ENCODE measurements at regions of chr5 and their contacts with region 1.

Region 1: DNA sequence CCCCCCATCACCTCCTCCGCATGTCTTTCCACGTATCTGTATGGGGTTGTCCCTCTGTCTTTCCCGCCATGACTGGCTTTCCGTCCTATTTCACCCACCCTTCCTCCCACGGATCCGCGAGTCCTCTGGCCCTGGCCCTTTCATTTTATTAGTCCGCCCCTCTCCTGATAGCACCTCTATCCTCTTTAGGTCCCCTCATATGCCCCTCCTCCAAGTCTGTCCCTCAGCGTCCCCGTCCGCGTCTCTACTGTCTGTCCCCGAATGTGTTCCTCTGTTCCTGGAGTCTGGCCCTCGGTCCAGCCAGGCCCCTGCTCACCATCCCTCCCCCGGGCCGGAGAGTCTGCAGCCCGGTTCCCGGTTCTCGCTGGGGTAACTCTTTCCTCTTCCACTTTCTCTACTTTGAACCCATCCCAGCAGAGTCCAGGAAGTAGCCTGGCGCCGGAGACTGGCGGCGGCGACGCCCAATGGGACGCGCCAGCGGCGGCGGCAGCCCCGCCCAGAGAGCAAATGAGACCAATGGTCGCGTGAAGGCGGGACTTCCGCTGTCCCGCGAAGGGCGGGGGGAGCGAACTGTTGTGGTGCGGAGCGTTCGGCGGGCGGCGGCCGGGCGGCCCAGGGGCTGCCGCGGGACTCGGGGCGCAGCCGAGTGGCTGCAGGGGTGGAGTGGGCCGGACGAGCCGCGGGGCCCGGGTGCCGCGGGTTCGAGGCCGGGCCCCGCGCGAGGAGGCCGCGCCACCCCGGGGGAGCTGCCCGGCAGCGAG is at the start of gene SAP30L:
- DNase-seq: peak; percentile 94
- H3K4me3 Mint-ChIP-seq: peak within 1 kb of the TSS; percentile 98
- H3K27ac Mint-ChIP-seq: peak within 1 kb of the TSS; percentile 92
- H3K4me1 Mint-ChIP-seq: peaks cover 42% of the 10 kb centered on the region
- H3K27me3 Mint-ChIP-seq: no peaks in the 10 kb centered on the region
- total RNA-seq, gene SAP30L: 29.3 to 30.3 TPM

Region 2: DNA sequence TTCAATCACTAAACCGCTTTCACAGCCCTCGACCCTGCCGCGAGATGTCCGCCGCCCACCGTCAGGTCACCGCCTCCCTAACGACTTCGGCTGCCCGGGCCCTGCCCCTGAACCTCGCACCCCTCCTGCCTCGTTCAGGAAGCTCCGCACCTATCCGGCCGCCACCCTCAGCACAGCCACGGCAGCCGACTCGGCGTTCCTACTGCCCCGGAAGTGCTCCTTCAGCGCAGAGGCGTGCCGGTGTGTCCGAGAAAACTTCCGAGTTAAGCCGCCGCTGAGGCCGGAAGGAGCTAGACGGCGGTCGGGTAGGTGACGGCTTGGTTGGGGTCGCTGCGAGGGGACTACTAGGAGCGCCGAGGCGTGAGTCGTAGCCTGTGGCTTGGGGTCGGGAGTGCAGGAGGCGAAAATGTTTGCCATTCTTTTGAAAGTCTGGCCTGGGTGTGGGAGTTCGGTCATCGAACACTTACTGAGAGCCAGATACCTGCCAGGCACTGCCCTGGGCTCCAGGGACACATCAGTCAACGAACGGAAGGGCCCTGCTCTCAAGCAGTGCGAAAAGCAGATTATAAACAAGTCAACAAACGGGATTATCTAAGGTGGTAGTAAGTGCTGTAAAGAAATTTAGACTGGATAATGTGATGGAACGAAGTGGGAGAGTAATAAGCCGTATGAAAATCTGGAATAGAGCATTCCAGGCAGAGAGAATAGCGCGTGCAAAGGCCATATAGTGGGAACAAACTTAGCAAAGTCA is 406.7 kb before region 1 on chr5 and contains the starts of genes FAM114A2 and MFAP3:
- CTCF ChIA-PET with region 1: no interaction called
- intact Hi-C with region 1: loop called (anchors 1 kb)
- DNase-seq: peak; percentile 93
- H3K4me3 Mint-ChIP-seq: peak within 1 kb of the TSS; percentile 95
- H3K27ac Mint-ChIP-seq: peak within 1 kb of the TSS; percentile 92
- H3K4me1 Mint-ChIP-seq: peaks cover 44% of the 10 kb centered on the region
- H3K27me3 Mint-ChIP-seq: no peaks in the 10 kb centered on the region
- total RNA-seq, gene FAM114A2: 25.0 to 25.9 TPM
- total RNA-seq, gene MFAP3: 7.9 to 8.4 TPM

Region 3: DNA sequence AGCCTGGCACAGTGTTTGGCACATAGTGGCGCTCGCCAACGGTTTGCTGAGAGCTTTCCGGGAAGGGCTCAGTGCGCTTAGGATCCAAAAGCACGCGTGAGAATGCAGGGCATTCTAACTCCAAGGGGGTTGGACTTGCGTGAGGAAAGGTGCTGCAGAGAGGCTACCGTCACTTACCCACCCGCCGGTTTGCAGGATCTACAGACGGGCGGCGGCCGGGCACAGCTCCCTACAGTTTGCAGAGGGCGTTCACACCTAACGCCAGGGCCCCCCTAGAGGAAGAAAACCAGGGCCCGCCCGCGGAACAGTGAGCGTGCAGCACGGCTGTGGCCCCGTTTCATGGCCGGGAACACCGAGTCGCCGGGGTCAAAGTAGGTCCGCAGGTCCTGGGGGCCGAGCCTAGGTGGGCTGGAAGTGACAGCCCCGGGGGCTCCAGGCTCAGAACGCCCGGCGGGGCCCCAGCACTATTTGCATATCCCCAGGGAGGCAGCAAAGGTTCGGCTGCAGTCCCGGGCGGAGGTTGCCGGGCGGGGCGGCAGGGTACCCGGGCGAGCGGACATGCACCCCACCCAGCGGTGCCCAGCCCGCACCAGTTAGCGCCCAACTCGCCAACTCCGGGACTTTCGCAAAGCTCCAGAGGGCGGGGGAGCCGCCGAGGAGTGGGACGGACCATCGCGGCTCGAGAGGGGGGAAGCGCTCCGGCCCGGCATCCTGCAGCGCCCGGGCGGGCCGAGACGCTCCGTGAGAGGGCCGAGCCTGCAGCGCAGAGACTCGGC is 255.6 kb before region 1 on chr5:
- CTCF ChIA-PET with region 1: no interaction called
- intact Hi-C with region 1: loop called (anchors 2 kb)
- DNase-seq: peak; percentile 82
- H3K4me3 Mint-ChIP-seq: peak overlapping the region; percentile 81
- H3K27ac Mint-ChIP-seq: no peak overlapping the region
- H3K4me1 Mint-ChIP-seq: peaks cover 32% of the 10 kb centered on the region
- H3K27me3 Mint-ChIP-seq: peaks cover 7% of the 10 kb centered on the region

Region 4: GRCh38 chr5:154196955-154197652 is 248.5 kb before region 1 on chr5:
- CTCF ChIA-PET with region 1: no interaction called
- intact Hi-C with region 1: loop called (anchors 2 kb)
- DNase-seq: no peak
- H3K4me3 Mint-ChIP-seq: no peak overlapping the region
- H3K27ac Mint-ChIP-seq: peak overlapping the region; percentile 86
- H3K4me1 Mint-ChIP-seq: peaks cover 67% of the 10 kb centered on the region
- H3K27me3 Mint-ChIP-seq: no peaks in the 10 kb centered on the region

Region 5: DNA sequence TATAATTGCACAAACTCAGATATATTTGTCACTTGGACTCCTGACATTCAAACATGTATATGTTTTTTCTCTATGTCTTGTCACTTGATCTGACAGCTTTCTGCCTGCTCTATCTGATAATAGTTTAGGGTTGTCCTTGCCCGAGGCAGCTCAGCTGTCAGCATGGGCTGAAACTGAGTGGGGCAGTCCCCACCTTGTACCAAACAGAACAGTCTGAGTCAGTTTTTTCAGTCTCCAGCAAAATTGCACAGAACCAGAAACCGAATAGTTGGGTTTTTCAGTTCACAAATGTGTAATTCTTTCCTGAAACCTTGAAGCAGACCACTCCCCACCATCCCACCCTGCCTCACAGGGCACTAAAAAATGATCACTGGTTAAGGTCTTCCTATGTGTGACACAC is 41.9 kb after region 1 on chr5:
- CTCF ChIA-PET with region 1: no interaction called
- intact Hi-C with region 1: loop called (anchors 2 kb)
- DNase-seq: peak; percentile 71
- H3K4me3 Mint-ChIP-seq: no peak overlapping the region
- H3K27ac Mint-ChIP-seq: no peak overlapping the region
- H3K4me1 Mint-ChIP-seq: peaks cover 39% of the 10 kb centered on the region
- H3K27me3 Mint-ChIP-seq: peaks cover 76% of the 10 kb centered on the region

Region 6: GRCh38 chr5:154513669-154514084 is 68.1 kb after region 1 on chr5:
- CTCF ChIA-PET with region 1: no interaction called
- intact Hi-C with region 1: loop called (anchors 2 kb)
- DNase-seq: peak; percentile 66
- H3K4me3 Mint-ChIP-seq: no peak overlapping the region
- H3K27ac Mint-ChIP-seq: no peak overlapping the region
- H3K4me1 Mint-ChIP-seq: peaks cover 19% of the 10 kb centered on the region
- H3K27me3 Mint-ChIP-seq: peaks cover 35% of the 10 kb centered on the region

Measured in activated naive CD4-positive, alpha-beta T cell treated with anti-CD3 and anti-CD28 coated beads for 36 hours (primary cell).